ENCODE measurements at regions of chr11 and their contacts with region 1.

Region 1: DNA sequence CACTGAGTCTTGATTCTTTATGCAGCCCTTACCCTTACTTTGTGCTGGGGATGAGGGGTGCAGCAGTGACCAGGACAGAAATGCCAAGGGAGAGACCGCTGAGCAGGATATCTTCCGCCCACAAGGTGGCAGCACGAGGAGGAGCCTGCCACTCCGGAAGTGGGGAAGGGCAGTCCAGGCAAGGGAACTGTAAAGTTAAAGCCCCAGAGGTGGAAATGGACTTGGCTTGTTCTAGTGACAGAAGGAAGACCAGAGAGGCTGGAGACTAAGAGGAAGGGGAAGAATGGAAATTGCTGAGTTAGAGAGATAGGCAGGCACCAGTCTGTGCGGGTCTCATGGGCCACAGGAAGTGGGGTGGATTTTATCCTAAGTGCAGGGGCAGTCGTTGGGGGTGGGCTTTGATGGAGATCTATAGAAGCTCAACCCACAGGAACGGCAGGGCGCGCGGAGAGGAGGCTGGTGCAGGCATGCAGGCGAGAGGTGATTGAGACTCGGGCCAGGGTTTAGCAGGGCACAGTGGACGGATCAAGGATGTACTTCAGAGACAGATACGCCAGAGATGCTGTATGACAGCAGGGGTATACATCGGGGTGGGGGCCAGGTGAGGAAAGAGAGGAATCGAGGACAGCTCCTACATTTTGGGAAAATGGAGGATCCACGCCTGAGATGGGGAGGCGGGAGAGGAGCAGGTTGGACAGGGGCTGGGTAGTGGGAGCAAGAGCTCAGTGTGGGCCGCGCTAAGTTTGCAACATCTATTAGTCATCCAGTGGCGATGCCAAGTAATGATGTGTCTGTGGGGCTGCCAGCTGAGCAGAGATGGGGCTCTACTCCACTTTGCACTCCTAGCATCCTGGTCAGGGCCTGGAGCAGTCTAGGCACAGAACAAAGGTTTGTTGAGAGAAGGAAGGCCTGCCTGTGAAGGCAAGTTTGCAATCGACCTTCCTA is 3.3 kb upstream of the GRK2 start:
- DNase-seq: peak; percentile 75 to 91
- H3K4me3 ChIP-seq: no peak overlapping the region
- H3K4me1 ChIP-seq: peaks cover 3% of the 10 kb centered on the region
- H3K27me3 ChIP-seq: no peaks in the 10 kb centered on the region

Region 2: GRCh38 chr11:67136156-67136555 is 126.8 kb before region 1 on chr11:
- in situ Hi-C with region 1: no loop called
- DNase-seq: no peak
- H3K4me3 ChIP-seq: no peak overlapping the region
- H3K4me1 ChIP-seq: no peaks in the 10 kb centered on the region
- H3K27me3 ChIP-seq: no peaks in the 10 kb centered on the region

Region 3: DNA sequence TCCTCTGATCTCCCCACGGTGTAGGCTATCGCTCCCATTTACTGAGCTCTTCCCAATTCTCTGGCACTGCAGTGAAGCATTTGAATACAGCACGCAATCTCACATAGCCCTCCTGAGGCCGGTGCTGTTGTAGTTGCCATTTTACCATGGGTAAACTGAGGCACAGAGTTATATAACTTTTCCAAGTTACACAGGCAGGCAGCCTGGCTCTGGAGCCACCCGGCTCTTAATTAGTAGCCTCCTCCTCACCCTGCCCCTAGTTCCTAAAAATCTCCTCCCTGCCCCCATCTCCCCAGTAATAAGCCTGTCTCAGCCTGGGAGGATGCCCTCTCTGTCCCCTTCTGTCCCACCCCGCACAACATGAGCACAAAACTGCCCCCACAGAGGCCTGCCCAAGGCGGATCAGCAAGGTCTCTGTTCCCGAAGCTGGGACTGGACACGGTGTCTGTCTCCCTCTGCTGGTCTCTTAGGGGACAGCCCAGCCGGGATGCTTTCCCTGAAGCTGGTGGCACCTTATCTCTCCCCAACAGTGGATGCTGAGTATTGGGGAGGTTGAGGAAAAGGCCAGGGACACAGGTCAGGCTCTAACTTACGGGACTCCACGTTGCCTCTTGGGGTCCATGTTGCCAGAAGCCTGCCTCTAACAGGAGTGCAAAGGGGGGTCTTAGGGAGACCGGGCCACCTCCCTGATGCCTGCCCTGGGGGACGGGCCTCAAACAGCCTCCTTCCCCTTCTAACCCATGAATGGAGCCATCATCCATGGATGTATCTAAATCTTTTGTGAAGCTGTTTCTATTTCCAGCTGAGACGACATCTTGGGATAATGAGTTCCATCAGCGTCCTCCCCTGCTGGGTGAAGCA is 119.5 kb after region 1 on chr11:
- in situ Hi-C with region 1: loop called (anchors 5 kb)
- DNase-seq: peak; percentile 60 to 86
- H3K4me3 ChIP-seq: no peak overlapping the region
- H3K4me1 ChIP-seq: no peaks in the 10 kb centered on the region
- H3K27me3 ChIP-seq: peaks cover 6% of the 10 kb centered on the region

Region 4: GRCh38 chr11:67530282-67530850 is 267.4 kb after region 1 on chr11:
- in situ Hi-C with region 1: no loop called
- DNase-seq: no peak
- H3K4me3 ChIP-seq: no peak overlapping the region
- H3K4me1 ChIP-seq: no peaks in the 10 kb centered on the region
- H3K27me3 ChIP-seq: no peaks in the 10 kb centered on the region